Transverse colon (tissue), 4 donors: ENCODE measurements at regions of chr17 and their contacts with region 1.

Region 1: GRCh38 chr17:27532269-27533263 is 76.3 kb downstream of the KSR1 start:
- DNase-seq: peak; percentile 54
- H3K4me3 ChIP-seq: no peak overlapping the region
- H3K27ac ChIP-seq: peak overlapping the region; percentile 19 to 59 (median 44)
- H3K4me1 ChIP-seq: peaks cover 24 to 66% (median 27%) of the 10 kb centered on the region in 4 donors
- H3K27me3 ChIP-seq: no peaks in the 10 kb centered on the region
- CTCF ChIP-seq: no peak
- EP300 ChIP-seq: peak; percentile 71
- POLR2A ChIP-seq: peak; percentile 23

Region 2: DNA sequence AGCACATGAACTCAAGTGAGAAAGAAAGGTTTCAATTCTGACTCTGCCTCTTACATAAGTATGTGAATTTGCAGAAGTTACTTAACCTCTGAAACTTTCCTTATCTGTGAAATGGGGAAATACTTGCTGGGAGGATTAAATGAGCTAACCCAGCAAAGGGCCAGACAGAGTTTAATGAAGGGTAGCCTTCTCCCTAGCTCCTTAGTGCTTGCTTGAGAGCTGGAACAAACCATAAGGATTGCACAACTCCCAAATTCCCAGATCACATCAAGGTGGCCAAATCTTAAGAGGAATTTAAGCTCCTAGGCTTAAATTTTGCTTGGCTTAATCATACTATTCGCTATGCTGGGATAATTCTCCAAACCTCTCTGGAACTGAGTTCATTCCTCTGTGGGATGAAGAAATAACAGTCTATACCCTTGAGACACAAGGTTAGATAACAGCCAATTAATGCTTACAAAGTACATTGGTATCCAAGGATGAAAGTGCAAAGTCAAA is 250.5 kb before region 1 on chr17:
- in situ Hi-C with region 1: no loop called
- intact Hi-C with region 1: no loop called
- DNase-seq: no peak
- H3K4me3 ChIP-seq: no peak overlapping the region
- H3K27ac ChIP-seq: peak overlapping the region in 2 of 4 donors; percentile 9 to 12
- H3K4me1 ChIP-seq: no peaks in the 10 kb centered on the region
- H3K27me3 ChIP-seq: no peaks in the 10 kb centered on the region
- CTCF ChIP-seq: no peak
- EP300 ChIP-seq: no peak
- POLR2A ChIP-seq: no peak

Region 3: GRCh38 chr17:27489045-27489715 is 43.4 kb before region 1 on chr17:
- in situ Hi-C with region 1: no loop called
- intact Hi-C with region 1: loop called (anchors 5 kb)
- DNase-seq: peak; percentile 59
- H3K4me3 ChIP-seq: no peak overlapping the region
- H3K27ac ChIP-seq: peak overlapping the region; percentile 12 to 41 (median 31)
- H3K4me1 ChIP-seq: peaks cover 21 to 38% (median 29%) of the 10 kb centered on the region in 4 donors
- H3K27me3 ChIP-seq: no peaks in the 10 kb centered on the region
- CTCF ChIP-seq: no peak
- EP300 ChIP-seq: no peak
- POLR2A ChIP-seq: no peak